Activated CD4-positive, alpha-beta memory T cell treated with anti-CD3 and anti-CD28 coated beads for 36 hours (primary cell): ENCODE measurements at regions of chr16 and their contacts with region 1.

Region 1: DNA sequence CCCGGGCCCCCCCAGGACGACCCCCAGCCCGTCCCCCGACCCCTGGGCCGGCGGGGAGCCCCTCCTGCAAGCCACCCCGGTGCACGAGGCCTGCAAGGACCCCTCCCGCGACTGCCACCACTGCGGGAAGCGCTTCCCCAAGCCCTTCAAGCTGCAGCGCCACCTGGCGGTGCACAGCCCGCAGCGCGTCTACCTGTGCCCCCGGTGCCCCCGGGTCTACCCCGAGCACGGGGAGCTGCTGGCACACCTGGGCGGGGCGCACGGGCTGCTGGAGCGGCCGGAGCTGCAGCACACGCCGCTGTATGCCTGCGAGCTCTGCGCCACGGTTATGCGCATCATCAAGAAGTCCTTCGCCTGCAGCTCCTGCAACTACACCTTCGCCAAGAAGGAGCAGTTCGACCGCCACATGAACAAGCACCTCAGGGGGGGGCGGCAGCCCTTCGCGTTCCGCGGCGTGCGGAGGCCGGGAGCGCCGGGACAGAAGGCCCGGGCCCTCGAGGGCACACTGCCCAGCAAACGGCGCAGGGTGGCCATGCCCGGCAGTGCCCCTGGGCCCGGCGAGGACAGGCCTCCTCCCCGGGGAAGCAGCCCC is 15.6 kb upstream of the ZFPM1 start:
- DNase-seq: peak; percentile 72
- H3K4me3 Mint-ChIP-seq: no peak overlapping the region
- H3K27ac Mint-ChIP-seq: no peak overlapping the region
- H3K4me1 Mint-ChIP-seq: no peaks in the 10 kb centered on the region
- H3K27me3 Mint-ChIP-seq: no peaks in the 10 kb centered on the region

Region 2: DNA sequence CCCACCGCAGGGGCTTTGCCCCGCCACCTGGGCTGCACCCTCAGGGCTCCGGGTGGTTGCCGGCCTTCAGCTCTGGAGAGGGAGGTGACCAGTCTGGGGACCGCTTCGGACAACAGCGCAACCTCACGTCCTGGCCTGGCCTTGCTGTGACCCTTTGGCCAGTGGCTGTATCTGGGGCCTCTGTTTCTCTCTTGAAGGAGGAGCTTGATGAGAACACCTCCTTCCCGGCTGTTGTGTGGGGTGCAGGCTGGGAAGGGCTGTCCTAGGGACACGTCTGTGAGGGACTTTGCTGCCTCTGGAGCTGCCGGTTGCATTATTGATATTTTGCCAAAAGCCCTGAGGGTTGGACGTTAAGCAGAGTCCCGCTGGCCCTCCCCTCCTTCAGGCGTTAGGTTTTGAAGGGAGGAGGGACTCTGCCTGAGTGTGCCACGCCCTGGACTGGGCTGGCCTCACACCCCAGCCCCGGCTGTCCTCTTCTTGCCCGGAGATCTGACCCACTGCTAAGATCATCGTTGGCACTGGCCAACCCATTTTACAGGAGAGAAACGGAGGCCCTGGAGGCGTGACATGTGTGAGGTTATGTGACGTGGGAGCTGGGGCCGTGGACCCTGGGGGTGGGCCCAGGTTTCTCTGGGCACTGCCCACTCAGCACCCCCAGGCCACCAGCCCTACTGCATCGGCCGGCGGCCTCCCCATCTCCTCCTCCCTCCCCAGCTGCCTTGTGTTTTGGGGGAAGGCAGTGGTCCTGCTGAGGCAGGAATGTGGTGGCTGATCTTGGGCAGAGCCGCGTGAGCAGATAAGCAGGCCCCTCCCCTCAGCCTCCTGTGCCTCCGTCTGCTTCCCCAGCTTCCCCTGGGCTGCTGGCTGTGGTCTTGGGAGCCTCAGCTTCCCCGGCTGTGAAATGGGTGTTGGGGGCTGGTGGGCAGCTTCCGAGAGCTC is 24.1 kb after region 1 on chr16:
- CTCF ChIA-PET with region 1: interaction called, 11 read pairs
- POLR2A ChIA-PET with region 1: no interaction called
- intact Hi-C with region 1: no loop called
- DNase-seq: no peak
- H3K4me3 Mint-ChIP-seq: no peak overlapping the region
- H3K27ac Mint-ChIP-seq: no peak overlapping the region
- H3K4me1 Mint-ChIP-seq: peaks cover 69% of the 10 kb centered on the region
- H3K27me3 Mint-ChIP-seq: no peaks in the 10 kb centered on the region

Region 3: DNA sequence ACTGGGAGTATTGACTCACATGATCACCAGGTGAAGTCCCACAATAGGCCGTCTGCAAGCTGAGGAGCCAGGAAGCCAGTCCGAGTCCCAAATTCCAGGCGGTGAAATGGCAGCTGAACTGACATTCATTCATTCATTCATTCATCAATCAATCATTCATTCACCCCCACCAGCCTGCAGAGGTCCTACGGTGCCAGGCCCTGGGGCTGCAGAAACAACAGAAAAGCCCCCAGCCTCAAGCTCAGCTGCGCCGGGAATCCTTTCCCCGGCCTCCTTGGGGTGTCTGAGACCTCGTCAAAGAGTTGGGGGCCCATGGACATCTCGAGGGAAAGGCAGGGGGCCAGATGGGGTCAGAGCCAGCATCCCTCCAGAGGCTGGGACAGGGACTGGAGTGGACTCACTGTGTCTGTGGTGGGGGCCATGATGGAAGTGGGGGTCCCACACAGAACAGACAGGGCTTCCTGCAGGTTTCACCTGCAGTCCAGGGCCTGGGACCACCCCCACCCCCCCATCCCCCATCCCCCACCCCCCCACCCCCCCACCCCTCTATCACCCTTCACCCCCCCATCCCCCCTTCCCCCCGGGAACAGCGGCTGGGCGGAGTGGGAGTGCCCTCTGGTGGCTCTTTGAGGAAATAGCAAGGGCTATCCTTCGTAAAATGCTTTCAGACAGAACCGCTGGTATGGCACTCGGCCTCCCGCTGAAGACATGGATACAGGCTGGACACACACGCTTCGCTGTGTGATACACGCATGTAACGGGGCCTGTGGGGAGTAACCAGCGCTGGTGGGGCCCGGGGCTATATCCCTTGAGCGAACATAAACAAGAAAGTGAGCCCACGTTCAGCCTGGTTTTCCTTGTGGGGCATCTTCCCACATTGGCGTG is 124.3 kb after region 1 on chr16:
- CTCF ChIA-PET with region 1: interaction called, 34 read pairs
- POLR2A ChIA-PET with region 1: no interaction called
- intact Hi-C with region 1: loop called (anchors 2 kb)
- DNase-seq: peak; percentile 62
- H3K4me3 Mint-ChIP-seq: no peak overlapping the region
- H3K27ac Mint-ChIP-seq: no peak overlapping the region
- H3K4me1 Mint-ChIP-seq: peaks cover 13% of the 10 kb centered on the region
- H3K27me3 Mint-ChIP-seq: peaks cover 5% of the 10 kb centered on the region